ENCODE measurements at regions of chr19 and their contacts with region 1.

Region 1: GRCh38 chr19:12666265-12667048 is at the starts of genes MAN2B1 and WDR83:
- DNase-seq: peak; percentile 91
- ATAC-seq: peak; percentile 71
- H3K4me3 ChIP-seq: peak within 1 kb of the TSS; percentile 84 to 99 (median 94)
- H3K4me3 Mint-ChIP-seq: peak within 1 kb of the TSS; percentile 98
- H3K27ac ChIP-seq: peak within 1 kb of the TSS; percentile 95 to 99
- H3K27ac Mint-ChIP-seq: peak within 1 kb of the TSS; percentile 97
- H3K4me1 ChIP-seq: peaks cover 37 to 60% of the 10 kb centered on the region in 2 donors
- H3K4me1 Mint-ChIP-seq: peaks cover 67% of the 10 kb centered on the region
- H3K27me3 ChIP-seq: no peaks in the 10 kb centered on the region
- H3K27me3 Mint-ChIP-seq: no peaks in the 10 kb centered on the region
- CTCF ChIP-seq: no peak
- total RNA-seq, gene MAN2B1: 252 and 256 TPM in 2 replicates
- total RNA-seq, gene WDR83: 24.6 and 25.8 TPM in 2 replicates

Region 2: DNA sequence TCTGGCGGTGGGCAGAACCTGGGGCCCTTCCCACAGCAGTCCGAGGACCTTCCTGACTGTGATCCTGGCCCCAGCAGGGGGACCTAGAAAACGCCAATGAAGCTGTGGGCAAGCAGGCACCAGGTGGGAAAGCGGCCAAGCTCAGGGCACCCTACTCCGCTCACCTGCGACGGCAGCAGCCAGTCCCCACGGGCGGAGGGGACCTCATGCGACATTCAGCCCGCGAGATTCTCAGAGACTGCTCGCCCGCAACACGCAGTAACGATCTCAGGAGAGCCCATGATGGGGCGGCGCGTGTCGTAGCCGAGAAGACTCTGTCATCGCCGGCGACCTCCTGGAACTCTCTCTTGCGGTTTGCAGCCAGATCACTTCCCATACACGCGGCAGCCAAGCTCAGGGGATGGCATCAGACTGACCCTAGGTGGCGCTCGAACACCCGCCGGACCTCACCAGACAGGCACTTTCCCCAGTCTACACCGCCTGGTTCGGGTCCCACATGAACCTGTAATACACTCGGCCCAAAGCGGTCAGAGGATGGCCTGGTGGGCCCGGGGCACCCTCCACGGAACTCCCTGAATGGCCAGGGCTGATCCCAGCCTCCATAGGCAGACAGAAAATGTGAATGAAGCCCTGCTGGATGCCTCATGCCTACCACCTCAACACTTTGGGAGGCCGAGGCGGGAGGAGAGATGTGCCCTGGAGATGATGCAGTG is 26.4 kb before region 1 on chr19:
- CTCF ChIA-PET with region 1: interaction called, 21 read pairs
- POLR2A ChIA-PET with region 1: no interaction called
- intact Hi-C with region 1: loop called (anchors 1 kb)
- DNase-seq: peak; percentile 91
- ATAC-seq: peak; percentile 95
- H3K4me3 ChIP-seq: peak overlapping the region in 4 of 5 experiments; percentile 18 to 48 (median 36)
- H3K4me3 Mint-ChIP-seq: peak overlapping the region; percentile 82
- H3K27ac ChIP-seq: peak overlapping the region; percentile 22 to 60
- H3K27ac Mint-ChIP-seq: peak overlapping the region; percentile 78
- H3K4me1 ChIP-seq: peaks cover 8 to 12% of the 10 kb centered on the region in 2 donors
- H3K4me1 Mint-ChIP-seq: peaks cover 18% of the 10 kb centered on the region
- H3K27me3 ChIP-seq: no peaks in the 10 kb centered on the region
- H3K27me3 Mint-ChIP-seq: no peaks in the 10 kb centered on the region
- CTCF ChIP-seq: peak; percentile 89

Region 3: DNA sequence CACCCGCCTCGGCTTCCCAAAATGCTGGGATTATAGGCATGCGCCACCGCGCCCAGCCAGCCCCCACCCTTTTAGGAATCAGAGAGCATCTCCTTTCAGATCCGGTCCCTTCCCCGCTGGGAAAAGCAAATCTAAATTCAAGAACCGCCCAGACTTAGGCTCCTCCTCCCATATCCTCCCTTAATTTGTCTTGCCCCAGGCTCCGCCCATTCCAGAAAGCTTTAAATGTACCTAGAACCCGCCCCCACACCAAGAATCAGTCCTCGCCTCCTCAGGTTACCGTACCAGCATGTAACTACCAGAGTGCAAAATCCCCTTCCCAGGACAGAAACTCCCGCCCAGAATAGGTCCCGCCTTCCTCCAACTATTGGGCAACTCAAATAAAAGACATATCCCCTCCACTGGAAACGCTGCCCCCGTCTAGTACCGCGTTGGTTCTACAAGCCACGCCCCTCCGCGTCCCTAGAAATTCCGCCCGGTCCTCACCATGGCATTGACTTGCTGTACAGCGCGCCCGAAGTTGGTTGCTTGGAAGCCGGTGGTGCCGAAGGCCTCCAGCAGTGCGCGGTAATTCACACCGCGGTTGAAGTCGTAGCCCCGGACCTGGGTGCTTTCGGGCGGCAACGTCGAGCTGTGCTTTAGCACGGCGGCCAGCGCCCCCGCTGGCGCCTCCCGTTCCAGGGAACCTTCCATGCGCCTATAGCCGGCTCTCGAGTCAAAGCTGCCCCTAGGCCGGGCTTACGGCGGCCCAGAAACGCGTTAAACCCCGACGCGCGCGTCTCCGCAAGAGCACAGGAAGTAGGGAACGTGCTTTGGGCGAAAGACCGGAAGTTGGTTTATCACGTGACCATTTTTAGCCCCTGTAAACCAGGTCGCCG is 14.9 kb after region 1 on chr19 and contains the start of gene DHPS:
- CTCF ChIA-PET with region 1: interaction called, 6 read pairs
- POLR2A ChIA-PET with region 1: interaction called, 11 read pairs
- intact Hi-C with region 1: loop called (anchors 1 kb)
- DNase-seq: peak; percentile 98
- ATAC-seq: peak; percentile 75
- H3K4me3 ChIP-seq: peak within 1 kb of the TSS; percentile 73 to 90 (median 86)
- H3K4me3 Mint-ChIP-seq: peak within 1 kb of the TSS; percentile 93
- H3K27ac ChIP-seq: peak within 1 kb of the TSS; percentile 89 to 95
- H3K27ac Mint-ChIP-seq: peak within 1 kb of the TSS; percentile 94
- H3K4me1 ChIP-seq: peaks cover 9 to 17% of the 10 kb centered on the region in 2 donors
- H3K4me1 Mint-ChIP-seq: peaks cover 24% of the 10 kb centered on the region
- H3K27me3 ChIP-seq: no peaks in the 10 kb centered on the region
- H3K27me3 Mint-ChIP-seq: no peaks in the 10 kb centered on the region
- CTCF ChIP-seq: no peak
- total RNA-seq, gene DHPS: 187 and 200 TPM in 2 replicates

Region 4: GRCh38 chr19:12696366-12697335 is 30.2 kb after region 1 on chr19 and contains the start of gene FBXW9:
- CTCF ChIA-PET with region 1: no interaction called
- POLR2A ChIA-PET with region 1: interaction called, 6 read pairs
- intact Hi-C with region 1: loop called (anchors 1 kb)
- DNase-seq: peak; percentile 98
- ATAC-seq: peak; percentile 87
- H3K4me3 ChIP-seq: peak within 1 kb of the TSS; percentile 64 to 88 (median 82)
- H3K4me3 Mint-ChIP-seq: peak within 1 kb of the TSS; percentile 94
- H3K27ac ChIP-seq: peak within 1 kb of the TSS; percentile 85 to 93
- H3K27ac Mint-ChIP-seq: peak within 1 kb of the TSS; percentile 98
- H3K4me1 ChIP-seq: peaks cover 13 to 17% of the 10 kb centered on the region in 2 donors
- H3K4me1 Mint-ChIP-seq: peaks cover 10% of the 10 kb centered on the region
- H3K27me3 ChIP-seq: no peaks in the 10 kb centered on the region
- H3K27me3 Mint-ChIP-seq: no peaks in the 10 kb centered on the region
- CTCF ChIP-seq: no peak
- total RNA-seq, gene FBXW9: 4.7 and 5.2 TPM in 2 replicates

Measured in B cell (primary cell).